ENCODE measurements at regions of chr9 and their contacts with region 1.

Region 1: DNA sequence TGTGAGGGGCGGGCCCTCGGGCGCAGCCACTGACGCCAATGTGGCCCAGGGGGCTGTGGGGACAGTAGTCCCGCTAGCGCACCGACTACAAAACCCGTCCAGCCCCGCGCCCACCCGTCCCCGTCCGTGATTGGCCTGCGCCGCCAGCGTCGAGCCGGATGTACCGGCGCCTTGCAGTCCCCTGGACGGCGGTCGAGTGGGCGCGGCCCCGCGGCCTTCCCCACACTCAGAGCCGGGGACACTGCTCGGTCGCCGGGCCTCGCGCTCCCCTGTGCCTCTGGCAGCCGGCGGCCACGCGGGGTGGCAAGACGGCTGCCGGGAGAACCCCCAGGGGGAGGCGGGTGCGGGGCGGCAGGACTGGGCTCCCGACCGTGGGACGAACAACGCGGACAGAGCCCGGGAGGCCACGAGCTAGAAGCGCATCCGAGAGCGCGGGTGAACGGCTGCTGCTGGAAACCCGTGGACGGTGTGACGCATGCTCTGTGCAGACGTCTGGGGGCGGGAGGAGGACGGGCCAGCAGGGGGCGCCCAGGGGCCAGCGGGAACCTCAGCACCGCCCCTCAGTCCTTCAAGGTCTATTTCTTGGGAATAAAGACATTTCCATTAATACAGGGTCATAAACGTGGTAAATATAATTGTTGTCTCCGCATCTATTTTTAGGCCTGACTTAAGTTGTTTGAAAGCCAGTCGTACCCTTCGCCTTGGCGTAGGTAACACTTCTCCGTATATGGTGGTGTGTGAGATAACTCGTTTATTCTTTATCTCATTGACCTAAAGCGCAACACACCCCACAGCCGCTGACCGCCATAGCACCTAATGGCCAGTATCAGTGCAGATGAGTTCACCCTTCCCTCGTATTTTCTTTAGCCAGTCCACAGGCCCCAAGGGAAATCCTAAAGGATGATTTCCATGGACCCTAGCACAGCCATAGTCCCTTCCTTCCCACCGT is 629 bp upstream of the BICD2 start:
- DNase-seq: peak; percentile 94 to 99 (median 98)
- ATAC-seq: peak; percentile 94
- H3K4me3 ChIP-seq: peak overlapping the region; percentile 68
- H3K4me3 Mint-ChIP-seq: peak overlapping the region; percentile 79 to 96 (median 88)
- H3K27ac ChIP-seq: peak overlapping the region; percentile 98
- H3K27ac Mint-ChIP-seq: peak overlapping the region; percentile 87 to 98 (median 98)
- H3K4me1 ChIP-seq: peaks cover 32 to 33% of the 10 kb centered on the region in 2 donors
- H3K4me1 Mint-ChIP-seq: peaks cover 37 to 65% (median 55%) of the 10 kb centered on the region in 7 donors
- H3K27me3 ChIP-seq: no peaks in the 10 kb centered on the region
- H3K27me3 Mint-ChIP-seq: no peaks in the 10 kb centered on the region

Region 2: DNA sequence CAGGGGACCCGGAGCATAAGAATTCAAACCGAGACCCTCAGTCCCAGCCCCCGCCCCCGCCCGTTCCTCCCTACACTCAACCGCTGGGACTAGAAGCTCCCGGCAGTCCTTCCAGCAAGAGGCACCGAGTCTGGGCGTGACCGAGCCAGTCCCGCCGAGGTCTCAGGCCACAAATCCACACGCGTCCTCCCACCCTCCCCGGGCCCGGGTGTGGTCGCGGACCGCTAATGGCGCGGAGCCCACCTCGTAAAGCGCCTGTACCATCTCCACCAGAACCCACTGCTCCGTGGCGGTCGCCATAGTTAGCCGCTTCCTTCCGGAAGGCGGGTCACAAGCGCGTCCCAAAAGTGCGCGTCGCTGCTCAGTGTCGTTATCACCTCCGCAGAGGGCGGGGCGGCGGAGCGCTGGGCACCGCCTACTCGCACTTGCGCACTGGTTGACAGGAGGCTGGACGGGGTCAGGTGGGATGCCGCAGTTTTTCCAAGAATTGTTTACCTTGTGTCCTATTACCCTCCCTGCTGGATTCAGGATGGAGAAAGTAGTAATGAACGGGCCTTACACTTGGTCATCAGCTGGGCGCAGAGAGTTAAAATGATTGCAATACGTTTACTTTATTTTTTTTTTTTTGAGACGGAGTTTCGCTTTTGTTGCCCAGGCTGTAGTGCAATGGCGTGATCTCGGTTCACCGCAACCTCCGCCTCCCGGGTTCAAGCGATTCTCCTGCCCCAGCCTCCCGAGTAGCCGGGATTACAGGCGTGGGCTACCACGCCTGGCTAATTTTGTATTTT is 650.0 kb before region 1 on chr9 and contains the start of gene SPTLC1:
- CTCF ChIA-PET with region 1: no interaction called
- POLR2A ChIA-PET with region 1: no interaction called
- intact Hi-C with region 1: loop called in 1 of 2 experiments (anchors 1 kb)
- DNase-seq: peak; percentile 89 to 97 (median 94)
- ATAC-seq: peak; percentile 99
- H3K4me3 ChIP-seq: peak within 1 kb of the TSS; percentile 85
- H3K4me3 Mint-ChIP-seq: peak within 1 kb of the TSS; percentile 91 to 99 (median 97)
- H3K27ac ChIP-seq: peak within 1 kb of the TSS; percentile 96
- H3K27ac Mint-ChIP-seq: peak within 1 kb of the TSS; percentile 96 to 100 (median 98)
- H3K4me1 ChIP-seq: peaks cover 17 to 20% of the 10 kb centered on the region in 2 donors
- H3K4me1 Mint-ChIP-seq: peaks cover 17 to 51% (median 42%) of the 10 kb centered on the region in 7 donors
- H3K27me3 ChIP-seq: no peaks in the 10 kb centered on the region
- H3K27me3 Mint-ChIP-seq: peaks cover 0 to 2% (median 0%) of the 10 kb centered on the region in 5 donors
- total RNA-seq, gene SPTLC1: 45.6 to 64.0 (median 51.0) TPM

Region 3: GRCh38 chr9:92535940-92536850 is 229.1 kb before region 1 on chr9 and contains the start of gene ECM2:
- CTCF ChIA-PET with region 1: no interaction called
- POLR2A ChIA-PET with region 1: no interaction called
- intact Hi-C with region 1: no loop called
- DNase-seq: no peak
- ATAC-seq: no peak
- H3K4me3 ChIP-seq: no peak within 1 kb of the TSS
- H3K4me3 Mint-ChIP-seq: no peak within 1 kb of the TSS
- H3K27ac ChIP-seq: no peak within 1 kb of the TSS
- H3K27ac Mint-ChIP-seq: no peak within 1 kb of the TSS
- H3K4me1 ChIP-seq: no peaks in the 10 kb centered on the region
- H3K4me1 Mint-ChIP-seq: peaks cover 0 to 6% (median 0%) of the 10 kb centered on the region in 7 donors
- H3K27me3 ChIP-seq: no peaks in the 10 kb centered on the region
- H3K27me3 Mint-ChIP-seq: no peaks in the 10 kb centered on the region
- total RNA-seq, gene ECM2: not detected

Region 4: DNA sequence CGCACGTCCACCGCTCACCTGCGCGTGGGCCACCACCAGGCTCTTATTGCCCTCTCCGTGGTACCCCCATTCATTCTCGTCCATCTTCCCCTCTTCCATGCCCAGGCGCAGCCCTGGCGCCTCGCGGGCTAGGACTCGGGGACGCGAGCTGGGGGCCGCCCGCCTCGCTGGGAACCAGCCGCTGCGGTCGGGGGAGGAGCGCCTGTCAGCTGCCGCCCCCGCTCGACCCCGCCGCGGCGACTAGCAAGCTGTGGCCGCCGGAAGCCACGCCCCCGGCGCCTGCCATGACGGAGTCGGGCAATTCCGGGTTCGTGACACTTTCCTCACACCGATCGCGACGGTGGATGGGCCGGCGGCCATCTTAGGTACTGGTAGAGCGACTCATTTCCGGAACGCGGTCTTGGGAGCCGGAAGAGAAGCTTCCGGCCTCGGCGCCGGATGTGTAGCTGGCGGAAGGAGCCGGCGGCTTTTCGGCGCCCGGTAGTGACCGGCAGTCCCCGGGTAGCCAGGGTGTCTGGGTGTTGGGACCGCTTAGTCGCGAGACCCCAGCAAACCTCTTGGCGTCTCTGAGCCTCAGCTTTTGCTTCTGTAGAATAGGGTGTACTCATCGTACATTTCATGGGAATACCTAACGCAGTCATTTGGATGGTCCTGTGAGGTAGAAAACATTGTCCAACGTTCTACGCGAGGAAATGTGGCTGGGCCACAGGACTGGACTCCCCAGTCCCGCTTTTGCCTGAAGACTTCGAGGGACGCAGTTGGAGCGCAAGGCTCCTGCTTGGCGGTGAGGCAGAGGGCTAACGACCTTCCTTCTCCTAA is 95.2 kb before region 1 on chr9 and contains the start of gene IPPK:
- CTCF ChIA-PET with region 1: no interaction called
- POLR2A ChIA-PET with region 1: interaction called, 25 read pairs
- intact Hi-C with region 1: loop called (anchors 1 kb)
- DNase-seq: peak; percentile 92 to 99 (median 96)
- ATAC-seq: peak; percentile 98
- H3K4me3 ChIP-seq: peak within 1 kb of the TSS; percentile 100
- H3K4me3 Mint-ChIP-seq: peak within 1 kb of the TSS; percentile 83 to 98 (median 95)
- H3K27ac ChIP-seq: peak within 1 kb of the TSS; percentile 91
- H3K27ac Mint-ChIP-seq: peak within 1 kb of the TSS; percentile 90 to 98 (median 95)
- H3K4me1 ChIP-seq: peaks cover 16 to 23% of the 10 kb centered on the region in 2 donors
- H3K4me1 Mint-ChIP-seq: peaks cover 27 to 46% (median 36%) of the 10 kb centered on the region in 7 donors
- H3K27me3 ChIP-seq: no peaks in the 10 kb centered on the region
- H3K27me3 Mint-ChIP-seq: no peaks in the 10 kb centered on the region
- total RNA-seq, gene IPPK: 5.9 to 12.8 (median 7.4) TPM

Region 5: DNA sequence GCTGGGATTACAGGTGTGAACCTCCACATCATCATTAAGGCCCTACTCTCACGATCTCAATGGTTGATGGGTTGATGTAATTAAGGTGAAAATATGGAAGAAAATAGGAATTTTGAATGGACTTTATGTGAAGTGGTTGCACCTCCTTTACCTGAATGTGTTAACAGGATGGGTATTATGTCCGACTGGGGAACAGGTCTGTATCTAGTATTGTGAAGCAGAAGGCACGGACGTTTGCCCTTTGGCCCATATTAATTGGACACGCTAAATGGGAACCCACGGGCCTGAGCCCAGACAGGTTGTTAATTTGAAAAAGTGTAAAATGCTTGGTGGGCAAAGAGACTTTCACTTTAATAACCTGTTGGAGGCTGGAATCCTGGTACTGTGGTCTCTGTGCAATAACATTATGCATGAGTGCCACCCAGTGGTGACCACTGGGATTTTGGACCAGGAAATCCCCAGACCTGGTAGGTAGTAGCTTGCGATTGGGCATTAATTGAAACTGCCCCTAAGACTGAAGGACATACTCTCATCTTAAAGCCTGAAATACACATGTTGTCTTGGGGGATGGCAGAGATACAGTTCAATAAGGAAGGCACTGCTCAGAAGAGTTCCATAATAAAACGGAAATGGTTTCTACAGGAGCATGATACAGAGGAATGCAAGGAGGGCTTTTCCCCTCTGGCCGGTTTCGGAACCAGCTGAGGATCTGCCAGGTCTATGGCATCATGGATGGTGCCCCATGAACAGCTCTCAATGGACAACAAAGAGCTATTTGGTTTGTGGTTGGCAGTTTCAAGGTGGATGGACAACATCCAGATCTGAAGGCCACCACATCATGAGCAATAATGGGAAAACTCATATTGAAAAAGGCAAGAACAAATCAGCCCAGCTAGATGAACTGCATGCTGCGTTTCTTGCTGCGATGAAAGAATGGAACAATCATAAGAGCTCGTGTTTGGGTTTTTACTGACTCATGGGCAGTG is 25.6 kb after region 1 on chr9:
- CTCF ChIA-PET with region 1: interaction called, 12 read pairs
- POLR2A ChIA-PET with region 1: interaction called, 4 read pairs
- intact Hi-C with region 1: loop called (anchors 1 kb)
- DNase-seq: peak; percentile 53 to 79 (median 70)
- ATAC-seq: peak; percentile 97
- H3K4me3 ChIP-seq: no peak overlapping the region
- H3K4me3 Mint-ChIP-seq: peak overlapping the region in 1 of 10 donors; percentile 4
- H3K27ac ChIP-seq: no peak overlapping the region
- H3K27ac Mint-ChIP-seq: peak overlapping the region in 2 of 9 donors; percentile 37 to 78
- H3K4me1 ChIP-seq: no peaks in the 10 kb centered on the region
- H3K4me1 Mint-ChIP-seq: peaks cover 2 to 11% (median 7%) of the 10 kb centered on the region in 7 donors
- H3K27me3 ChIP-seq: no peaks in the 10 kb centered on the region
- H3K27me3 Mint-ChIP-seq: peaks cover 0 to 13% (median 6%) of the 10 kb centered on the region in 5 donors

Region 6: GRCh38 chr9:92887880-92888338 is 122.6 kb after region 1 on chr9:
- CTCF ChIA-PET with region 1: no interaction called
- POLR2A ChIA-PET with region 1: no interaction called
- intact Hi-C with region 1: loop called in 1 of 2 experiments (anchors 1 kb)
- DNase-seq: peak in 7 of 9 donors; percentile 60 to 79 (median 67)
- ATAC-seq: peak; percentile 74
- H3K4me3 ChIP-seq: peak overlapping the region; percentile 29
- H3K4me3 Mint-ChIP-seq: peak overlapping the region; percentile 4 to 92 (median 77)
- H3K27ac ChIP-seq: peak overlapping the region; percentile 57
- H3K27ac Mint-ChIP-seq: peak overlapping the region; percentile 23 to 97 (median 92)
- H3K4me1 ChIP-seq: peaks cover 18 to 35% of the 10 kb centered on the region in 2 donors
- H3K4me1 Mint-ChIP-seq: peaks cover 21 to 86% (median 78%) of the 10 kb centered on the region in 7 donors
- H3K27me3 ChIP-seq: no peaks in the 10 kb centered on the region
- H3K27me3 Mint-ChIP-seq: peaks cover 0 to 6% (median 0%) of the 10 kb centered on the region in 5 donors

Region 7: GRCh38 chr9:92988215-92988819 is 223.1 kb after region 1 on chr9:
- CTCF ChIA-PET with region 1: no interaction called
- POLR2A ChIA-PET with region 1: no interaction called
- intact Hi-C with region 1: no loop called
- DNase-seq: no peak
- ATAC-seq: peak; percentile 19
- H3K4me3 ChIP-seq: no peak overlapping the region
- H3K4me3 Mint-ChIP-seq: peak overlapping the region; percentile 3 to 72 (median 59)
- H3K27ac ChIP-seq: peak overlapping the region; percentile 47
- H3K27ac Mint-ChIP-seq: peak overlapping the region; percentile 60 to 96 (median 86)
- H3K4me1 ChIP-seq: peaks cover 59 to 76% of the 10 kb centered on the region in 2 donors
- H3K4me1 Mint-ChIP-seq: peaks cover 71 to 98% (median 96%) of the 10 kb centered on the region in 7 donors
- H3K27me3 ChIP-seq: no peaks in the 10 kb centered on the region
- H3K27me3 Mint-ChIP-seq: no peaks in the 10 kb centered on the region

Region 8: DNA sequence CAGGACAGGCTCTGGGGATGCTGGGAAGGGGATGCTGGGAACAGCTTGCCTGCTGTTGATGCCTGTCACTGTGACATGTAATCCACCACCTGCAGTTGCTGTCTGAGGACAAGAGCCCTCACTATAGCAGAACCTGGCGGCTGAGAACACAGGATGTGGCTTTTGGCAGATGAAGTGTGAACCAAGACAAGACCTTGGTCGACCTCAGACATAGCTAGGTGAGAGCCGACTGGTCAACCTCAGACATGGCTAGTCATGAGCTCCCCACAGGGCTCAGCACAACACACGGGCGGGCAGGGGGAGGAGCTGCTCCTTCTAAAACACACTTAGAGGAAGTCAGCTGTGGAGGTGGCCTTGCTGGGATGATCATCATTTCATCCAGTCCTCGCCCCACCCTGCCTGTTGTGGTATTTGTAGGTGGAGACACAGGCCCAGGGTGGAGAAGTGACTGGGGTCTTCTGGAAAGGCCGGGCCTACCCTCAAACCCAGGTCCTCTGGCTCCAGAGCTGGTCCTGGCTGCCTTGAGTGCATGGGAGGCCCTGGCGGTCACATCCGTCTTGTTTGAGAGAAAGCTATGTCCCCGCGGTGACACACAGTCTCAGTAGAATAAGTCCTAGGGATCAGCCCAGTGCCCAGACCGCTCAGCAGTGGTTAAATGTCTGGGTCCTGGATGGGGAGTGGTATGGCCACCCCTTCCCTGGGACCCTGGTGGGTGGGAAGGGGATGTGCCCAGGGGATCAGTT is 299.3 kb after region 1 on chr9:
- CTCF ChIA-PET with region 1: no interaction called
- POLR2A ChIA-PET with region 1: interaction called, 3 read pairs
- intact Hi-C with region 1: loop called (anchors 1 kb)
- DNase-seq: peak; percentile 54 to 95 (median 90)
- ATAC-seq: peak; percentile 96
- H3K4me3 ChIP-seq: peak overlapping the region; percentile 90
- H3K4me3 Mint-ChIP-seq: peak overlapping the region; percentile 87 to 97 (median 92)
- H3K27ac ChIP-seq: peak overlapping the region; percentile 88
- H3K27ac Mint-ChIP-seq: peak overlapping the region; percentile 97 to 100 (median 99)
- H3K4me1 ChIP-seq: peaks cover 63 to 87% of the 10 kb centered on the region in 2 donors
- H3K4me1 Mint-ChIP-seq: peaks cover 71 to 95% (median 86%) of the 10 kb centered on the region in 7 donors
- H3K27me3 ChIP-seq: no peaks in the 10 kb centered on the region
- H3K27me3 Mint-ChIP-seq: no peaks in the 10 kb centered on the region

Region 9: GRCh38 chr9:93566408-93567270 is 801.4 kb after region 1 on chr9:
- CTCF ChIA-PET with region 1: no interaction called
- POLR2A ChIA-PET with region 1: interaction called, 4 read pairs
- intact Hi-C with region 1: loop called (anchors 1 kb)
- DNase-seq: peak; percentile 94 to 100 (median 99)
- ATAC-seq: peak; percentile 99
- H3K4me3 ChIP-seq: peak overlapping the region; percentile 76
- H3K4me3 Mint-ChIP-seq: peak overlapping the region; percentile 80 to 91 (median 86)
- H3K27ac ChIP-seq: peak overlapping the region; percentile 92
- H3K27ac Mint-ChIP-seq: peak overlapping the region; percentile 84 to 96 (median 93)
- H3K4me1 ChIP-seq: peaks cover 8 to 9% of the 10 kb centered on the region in 2 donors
- H3K4me1 Mint-ChIP-seq: peaks cover 10 to 25% (median 20%) of the 10 kb centered on the region in 7 donors
- H3K27me3 ChIP-seq: no peaks in the 10 kb centered on the region
- H3K27me3 Mint-ChIP-seq: no peaks in the 10 kb centered on the region